ENCODE measurements at regions of chr1 and their contacts with region 1.

Region 1: DNA sequence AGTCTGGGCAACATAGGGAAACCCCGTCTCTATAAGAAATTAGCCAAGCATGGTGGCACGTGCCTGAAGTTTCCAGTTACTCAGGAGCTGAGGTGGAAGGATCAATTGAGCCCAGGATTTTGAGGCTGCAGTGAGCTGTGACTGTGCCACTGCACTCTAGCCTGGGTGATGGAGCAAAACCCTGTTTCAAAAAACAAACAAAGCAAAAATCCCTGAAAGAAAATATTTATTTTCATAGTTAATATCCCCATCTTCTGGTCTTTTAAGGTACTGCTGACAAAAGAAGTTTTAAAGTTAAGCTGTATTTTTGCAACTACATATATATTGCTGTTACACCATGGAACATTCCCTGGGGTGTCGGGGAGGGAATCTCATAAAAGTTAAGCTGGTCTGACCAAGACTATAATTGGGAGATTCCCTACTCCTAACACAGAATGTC is 26.0 kb downstream of the VAMP4 start:
- DNase-seq: no peak
- H3K4me3 ChIP-seq: no peak overlapping the region
- CTCF ChIP-seq: no peak

Region 2: DNA sequence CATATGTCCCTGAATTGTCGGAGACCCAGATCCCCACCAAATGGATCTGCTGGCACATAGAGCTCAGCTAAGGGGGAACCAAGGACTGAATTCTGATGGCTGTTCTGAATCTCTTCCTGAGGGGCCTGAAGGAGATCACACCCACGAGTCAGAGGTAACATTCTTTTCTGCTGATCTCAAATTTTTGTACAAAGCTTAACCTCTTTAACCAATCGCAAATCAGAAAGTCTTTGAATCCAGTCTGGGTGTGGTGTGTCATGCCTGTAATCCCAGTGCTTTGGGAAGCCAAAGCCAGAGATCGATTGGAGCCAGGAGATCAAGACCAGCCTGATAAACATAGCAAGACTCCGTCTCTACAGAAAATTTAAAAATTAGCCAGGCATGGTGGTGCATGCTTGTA is 293.3 kb before region 1 on chr1:
- CTCF ChIA-PET with region 1: no interaction called
- POLR2A ChIA-PET with region 1: no interaction called
- DNase-seq: no peak
- H3K4me3 ChIP-seq: no peak overlapping the region
- CTCF ChIP-seq: no peak

Region 3: GRCh38 chr1:171485375-171486047 is 230.3 kb before region 1 on chr1 and contains the start of gene PRRC2C:
- CTCF ChIA-PET with region 1: interaction called, 12 read pairs
- POLR2A ChIA-PET with region 1: no interaction called
- DNase-seq: peak; percentile 93
- H3K4me3 ChIP-seq: peak within 1 kb of the TSS; percentile 93
- CTCF ChIP-seq: peak; percentile 74

Region 4: DNA sequence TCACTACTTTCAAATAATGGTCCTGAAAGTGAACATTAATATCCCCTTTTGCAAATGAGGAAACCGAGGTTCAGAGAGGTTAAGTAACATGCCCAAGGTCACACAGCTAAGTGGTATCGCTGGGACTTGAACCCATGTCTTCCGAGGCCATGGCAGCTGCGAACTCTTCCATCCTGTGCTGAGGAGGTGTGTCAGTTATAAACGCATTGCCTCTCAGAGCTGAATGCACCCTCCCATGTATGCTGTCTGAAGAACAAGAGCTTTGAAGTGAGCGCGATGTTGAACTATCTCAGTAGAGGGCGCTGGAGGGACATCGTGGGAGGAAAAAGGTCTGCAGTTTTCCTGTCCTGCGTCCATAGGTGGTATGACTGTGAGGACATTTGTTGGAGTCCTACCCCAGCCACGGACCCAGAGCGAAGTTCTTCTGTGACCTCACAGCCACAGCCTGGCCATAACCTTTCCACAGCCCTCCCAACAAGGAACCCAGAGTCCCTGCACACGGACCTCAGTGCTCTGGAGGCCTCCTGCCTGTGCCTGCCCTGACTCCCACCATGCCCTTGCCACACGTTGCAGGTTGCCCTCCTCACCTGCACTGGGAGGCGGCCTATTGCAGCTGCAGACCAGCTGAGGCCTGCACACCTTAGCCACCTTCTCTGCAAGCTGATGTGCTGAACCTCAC is 70.9 kb before region 1 on chr1:
- CTCF ChIA-PET with region 1: interaction called, 100 read pairs
- POLR2A ChIA-PET with region 1: no interaction called
- DNase-seq: peak; percentile 29
- H3K4me3 ChIP-seq: no peak overlapping the region
- CTCF ChIP-seq: peak; percentile 85

Region 5: DNA sequence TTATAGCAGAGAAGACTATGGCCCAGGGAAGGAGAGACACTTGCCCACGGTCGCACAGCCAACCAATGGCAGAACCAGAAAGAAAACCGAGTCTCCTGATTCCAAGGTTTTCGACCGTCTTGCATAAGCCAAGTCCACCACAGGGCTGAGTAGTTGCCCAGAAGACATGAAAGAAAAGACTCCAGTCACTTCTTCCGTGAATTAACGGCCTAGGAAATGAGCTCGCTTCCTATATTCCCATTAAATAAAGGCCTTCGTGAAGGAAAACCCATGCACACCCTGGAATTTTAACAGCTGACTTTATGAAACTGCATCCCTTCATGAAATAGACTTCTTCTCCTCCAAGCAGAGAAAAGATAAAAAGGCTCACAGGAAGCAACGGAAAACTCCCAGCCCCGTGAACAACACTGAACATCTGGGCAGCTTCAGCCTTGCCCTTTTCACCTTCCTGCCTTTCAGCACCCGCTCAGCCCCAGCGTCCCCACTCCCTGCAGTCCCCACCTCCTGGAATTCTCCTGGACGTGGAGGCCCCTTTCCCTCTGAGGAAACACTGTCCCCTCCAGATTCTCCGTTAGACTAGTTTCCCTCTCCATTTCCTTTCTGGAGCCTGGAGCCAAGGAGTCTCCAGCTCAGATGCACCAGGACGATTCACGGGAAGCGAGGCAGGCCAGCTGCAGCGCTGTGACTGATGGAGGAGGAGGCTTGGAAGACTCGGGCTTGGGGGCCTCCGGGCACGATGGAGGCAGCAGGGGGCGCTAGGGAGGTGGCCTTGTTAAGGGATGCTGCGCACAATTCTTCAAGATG is 60.7 kb before region 1 on chr1:
- CTCF ChIA-PET with region 1: interaction called, 33 read pairs
- POLR2A ChIA-PET with region 1: no interaction called
- DNase-seq: no peak
- H3K4me3 ChIP-seq: no peak overlapping the region
- CTCF ChIP-seq: peak; percentile 75

Region 6: DNA sequence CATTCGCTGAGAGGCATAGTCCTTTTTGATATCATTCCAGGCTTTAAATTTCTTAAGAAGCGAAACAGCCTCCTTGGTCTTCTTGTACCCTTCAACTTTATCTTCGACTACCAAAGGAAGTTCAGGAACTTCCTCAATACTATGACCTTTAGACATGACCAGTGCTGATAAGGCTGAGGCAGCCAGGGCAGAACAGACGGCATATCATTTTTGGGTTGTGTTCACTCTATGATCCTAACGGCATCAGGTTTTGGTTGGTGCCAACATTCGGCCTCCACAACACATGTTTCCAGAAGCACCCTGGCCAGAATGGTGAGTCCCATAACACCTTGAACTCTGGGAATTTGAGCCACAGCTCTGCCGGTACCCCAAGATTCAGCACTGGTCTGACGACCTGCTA is 32.0 kb before region 1 on chr1:
- CTCF ChIA-PET with region 1: no interaction called
- POLR2A ChIA-PET with region 1: no interaction called
- DNase-seq: no peak
- H3K4me3 ChIP-seq: no peak overlapping the region
- CTCF ChIP-seq: no peak

Region 7: GRCh38 chr1:171730052-171730451 is 14.2 kb after region 1 on chr1:
- CTCF ChIA-PET with region 1: interaction called, 10 read pairs
- POLR2A ChIA-PET with region 1: no interaction called
- DNase-seq: no peak
- H3K4me3 ChIP-seq: no peak overlapping the region
- CTCF ChIP-seq: no peak

Region 8: DNA sequence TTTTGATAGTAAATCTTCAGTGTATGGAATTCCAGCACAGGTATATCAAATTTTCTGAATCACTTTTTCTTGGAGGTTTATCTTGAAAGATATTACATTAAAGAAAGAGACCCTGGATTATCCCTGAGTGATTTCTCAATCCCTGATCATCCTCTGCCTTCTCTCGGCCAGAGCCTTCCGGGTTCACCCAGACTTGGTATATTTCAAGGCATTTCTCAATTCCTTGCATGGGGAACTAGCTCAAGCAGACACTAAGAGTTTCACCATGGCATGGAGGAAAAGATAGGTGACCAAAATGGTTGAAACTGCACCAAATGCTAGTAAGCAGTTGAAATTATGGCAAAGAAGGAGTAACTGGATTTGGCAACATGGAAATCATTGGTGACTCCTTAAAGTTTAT is 20.4 kb after region 1 on chr1:
- CTCF ChIA-PET with region 1: interaction called, 27 read pairs
- POLR2A ChIA-PET with region 1: no interaction called
- DNase-seq: no peak
- H3K4me3 ChIP-seq: no peak overlapping the region
- CTCF ChIP-seq: no peak

Region 9: DNA sequence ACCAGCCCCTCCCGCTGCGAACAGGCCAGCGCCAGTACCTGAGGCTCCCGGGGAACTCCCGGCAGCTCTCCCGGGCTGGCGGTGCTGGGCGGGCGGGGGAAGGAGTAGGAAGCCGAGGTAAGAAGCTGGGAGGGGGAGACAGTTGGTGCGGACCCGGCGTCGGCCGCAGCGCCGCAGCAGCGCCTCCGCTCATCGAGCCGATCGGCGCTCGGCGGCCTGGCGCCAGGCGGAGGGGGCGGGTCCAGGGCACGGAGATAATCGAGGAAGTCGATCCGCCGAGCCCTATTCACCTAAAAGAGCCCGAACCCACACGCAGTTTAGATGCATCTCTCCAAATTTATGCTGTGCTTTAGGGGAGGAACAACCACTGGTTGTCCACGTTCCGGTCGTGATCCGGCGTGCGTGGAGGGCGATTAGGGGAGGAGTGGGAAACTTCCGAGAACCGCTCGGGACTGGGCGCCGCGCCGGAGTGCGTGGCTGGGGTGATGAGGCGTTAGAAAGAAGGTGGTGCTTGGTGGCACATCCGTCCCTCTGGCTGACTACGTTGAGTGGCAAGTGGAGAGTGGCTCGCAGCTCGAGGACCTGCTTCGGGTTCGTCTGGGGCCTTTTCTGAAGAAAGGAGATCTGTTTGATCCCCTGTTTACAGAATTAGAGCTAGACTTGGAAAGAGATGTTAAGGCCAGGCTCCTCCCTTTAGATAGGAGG is 26.2 kb after region 1 on chr1 and contains the start of gene VAMP4:
- CTCF ChIA-PET with region 1: interaction called, 27 read pairs
- POLR2A ChIA-PET with region 1: no interaction called
- DNase-seq: no peak
- H3K4me3 ChIP-seq: peak within 1 kb of the TSS; percentile 89
- CTCF ChIP-seq: no peak

Region 10: DNA sequence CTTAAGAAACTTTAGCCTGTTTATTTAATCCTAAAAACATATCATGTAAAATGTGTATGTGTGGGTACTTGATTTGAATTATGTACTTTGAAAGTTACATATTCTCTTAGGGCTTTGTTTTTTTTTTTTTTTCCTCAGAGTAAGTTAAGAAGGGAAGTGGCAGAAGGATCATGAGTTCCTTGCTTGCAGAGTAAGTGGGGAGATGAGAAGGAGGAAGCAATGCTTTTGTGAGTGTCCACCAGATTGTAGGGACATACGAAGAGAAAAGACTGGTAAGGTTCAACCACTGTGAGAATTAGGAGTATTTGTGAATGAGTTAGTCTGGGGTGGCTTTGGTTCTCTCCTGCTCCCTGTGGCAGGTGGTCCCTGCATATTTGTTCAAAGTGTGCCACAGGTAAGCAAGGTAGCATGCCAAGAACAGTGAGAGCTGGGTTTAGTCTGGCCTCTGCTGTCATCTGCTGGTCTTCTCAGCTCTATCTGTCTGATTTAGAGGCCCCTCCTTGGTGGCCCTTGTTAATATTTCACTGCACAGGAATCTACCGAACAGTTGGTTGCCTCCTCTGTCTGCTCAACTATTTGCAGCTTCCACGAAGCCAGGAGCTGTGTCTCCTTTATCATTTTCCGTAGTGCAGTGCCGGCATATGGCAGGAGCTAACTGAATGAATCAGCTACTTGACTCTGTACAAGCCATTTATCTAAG is 135.0 kb after region 1 on chr1:
- CTCF ChIA-PET with region 1: no interaction called
- POLR2A ChIA-PET with region 1: no interaction called
- DNase-seq: no peak
- H3K4me3 ChIP-seq: no peak overlapping the region
- CTCF ChIP-seq: no peak

Region 11: DNA sequence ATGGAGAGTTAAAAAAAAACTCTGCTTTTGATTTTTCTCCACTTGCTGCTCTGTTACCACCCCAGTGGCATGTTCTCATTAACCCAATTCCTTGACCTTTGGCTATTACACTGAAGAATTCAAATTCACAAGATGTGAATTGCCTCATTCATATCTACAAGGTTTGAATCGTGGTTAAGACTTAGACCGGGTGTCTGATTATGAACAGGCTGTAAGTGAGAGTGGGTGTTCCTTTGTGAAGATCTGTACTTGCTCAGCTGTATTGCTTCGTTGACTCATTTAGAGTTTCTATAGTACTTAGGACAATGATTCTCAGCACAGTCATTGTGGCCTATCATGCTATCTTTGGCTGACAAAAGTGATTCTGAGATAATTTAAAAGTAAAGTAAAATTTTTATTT is 161.9 kb after region 1 on chr1:
- CTCF ChIA-PET with region 1: no interaction called
- POLR2A ChIA-PET with region 1: no interaction called
- DNase-seq: no peak
- H3K4me3 ChIP-seq: no peak overlapping the region
- CTCF ChIP-seq: no peak